ENCODE measurements at regions of chr12 and their contacts with region 1.

Region 1: GRCh38 chr12:54220092-54220557 is 31.3 kb upstream of the SMUG1 start:
- DNase-seq: peak in 2 of 3 donors; percentile 65 to 77
- ATAC-seq: peak; percentile 56
- H3K4me3 ChIP-seq: no peak overlapping the region
- H3K4me1 ChIP-seq: peaks cover 13% of the 10 kb centered on the region
- CTCF ChIP-seq: peak; percentile 53

Region 2: DNA sequence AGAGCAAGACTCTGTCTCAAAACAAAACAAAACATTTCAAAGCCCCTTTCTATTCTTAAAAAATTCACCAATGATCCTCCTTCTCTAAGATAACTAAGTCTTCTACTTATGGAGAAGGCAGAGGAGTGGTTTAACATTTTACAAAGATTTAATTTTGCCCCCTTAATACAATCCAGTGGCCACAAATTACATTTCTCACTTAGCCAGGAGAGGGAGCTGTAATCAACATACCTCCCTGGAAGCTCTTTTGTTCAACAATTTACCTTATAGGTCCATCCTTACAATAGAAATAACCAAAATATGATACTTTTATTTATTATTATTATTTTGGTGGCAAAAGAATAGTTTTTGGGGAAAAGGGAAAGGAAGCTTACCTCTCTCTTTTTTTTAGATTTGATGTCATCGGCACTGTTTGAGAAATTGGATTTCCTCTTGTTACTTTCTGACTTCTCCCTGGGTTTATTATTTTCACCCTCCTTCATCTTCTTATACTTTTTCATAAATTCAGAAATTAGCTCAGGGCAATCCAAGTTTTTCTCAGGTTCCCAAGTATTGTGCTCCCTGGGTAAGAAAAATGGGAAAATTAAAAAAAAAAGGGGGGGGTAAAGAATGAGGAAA is 31.7 kb after region 1 on chr12:
- intact Hi-C with region 1: no loop called
- DNase-seq: peak in 1 of 3 donors; percentile 40
- ATAC-seq: peak; percentile 49
- H3K4me3 ChIP-seq: no peak overlapping the region
- H3K4me1 ChIP-seq: no peaks in the 10 kb centered on the region
- CTCF ChIP-seq: no peak

Region 3: DNA sequence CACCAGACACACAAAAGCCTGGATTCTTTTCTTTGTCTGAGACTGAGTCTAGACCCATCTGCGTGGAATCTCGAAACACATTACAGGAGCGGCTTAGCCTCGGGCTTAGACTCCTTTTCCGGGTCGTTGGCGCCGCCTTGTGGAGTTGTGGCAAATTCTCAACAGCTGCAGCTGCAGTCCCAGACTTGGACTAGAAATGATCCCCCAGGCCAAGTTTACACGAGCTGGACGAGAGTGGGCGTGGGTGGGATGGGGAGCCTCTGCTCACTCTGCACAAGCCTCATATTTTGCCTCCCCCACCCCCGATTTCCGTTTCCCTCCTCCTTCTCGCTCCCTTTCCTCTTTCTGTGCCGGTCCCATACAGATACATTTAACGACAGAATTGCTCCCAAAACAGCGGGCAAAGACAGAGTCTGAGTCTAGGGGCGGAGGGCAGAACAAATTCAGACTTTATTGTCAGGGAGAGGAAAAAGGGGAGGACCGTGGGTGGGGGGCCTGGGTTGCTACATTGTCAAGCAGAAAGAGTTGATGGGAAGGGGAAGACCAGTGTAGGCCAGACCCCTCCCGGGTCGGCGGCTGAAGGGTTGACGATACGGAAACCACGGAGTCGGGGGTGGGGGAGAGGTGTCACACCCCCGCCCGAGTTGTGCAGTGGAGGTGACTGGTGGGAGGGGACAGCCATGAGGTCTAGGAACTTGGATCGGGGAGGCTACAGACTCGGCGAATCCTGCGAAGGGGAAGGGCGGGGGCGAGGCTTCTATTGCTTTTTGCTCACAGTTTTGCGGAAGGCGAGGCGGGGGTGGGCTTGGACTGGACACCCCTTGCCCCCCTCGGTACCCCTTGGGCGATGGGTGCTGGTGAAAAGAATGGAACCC is 148.8 kb after region 1 on chr12:
- intact Hi-C with region 1: loop called in 1 of 2 experiments (anchors 10 kb)
- DNase-seq: peak; percentile 90 to 93 (median 91)
- ATAC-seq: peak; percentile 81
- H3K4me3 ChIP-seq: no peak overlapping the region
- H3K4me1 ChIP-seq: peaks cover 16% of the 10 kb centered on the region
- CTCF ChIP-seq: peak; percentile 76